ENCODE measurements at regions of chr7 and their contacts with region 1.

Region 1: GRCh38 chr7:95690367-95690947 is 81.9 kb upstream of the DYNC1I1 start:
- DNase-seq: peak; percentile 41
- ATAC-seq: peak; percentile 78
- H3K4me3 ChIP-seq: no peak overlapping the region
- H3K27ac ChIP-seq: no peak overlapping the region
- H3K4me1 ChIP-seq: no peaks in the 10 kb centered on the region
- H3K27me3 ChIP-seq: peaks cover 2% of the 10 kb centered on the region; the same call in 1 of the 2 replicates
- CTCF ChIP-seq: peak; percentile 49
- POLR2A ChIP-seq: no peak
- RAD21 ChIP-seq: peak; percentile 37

Region 2: DNA sequence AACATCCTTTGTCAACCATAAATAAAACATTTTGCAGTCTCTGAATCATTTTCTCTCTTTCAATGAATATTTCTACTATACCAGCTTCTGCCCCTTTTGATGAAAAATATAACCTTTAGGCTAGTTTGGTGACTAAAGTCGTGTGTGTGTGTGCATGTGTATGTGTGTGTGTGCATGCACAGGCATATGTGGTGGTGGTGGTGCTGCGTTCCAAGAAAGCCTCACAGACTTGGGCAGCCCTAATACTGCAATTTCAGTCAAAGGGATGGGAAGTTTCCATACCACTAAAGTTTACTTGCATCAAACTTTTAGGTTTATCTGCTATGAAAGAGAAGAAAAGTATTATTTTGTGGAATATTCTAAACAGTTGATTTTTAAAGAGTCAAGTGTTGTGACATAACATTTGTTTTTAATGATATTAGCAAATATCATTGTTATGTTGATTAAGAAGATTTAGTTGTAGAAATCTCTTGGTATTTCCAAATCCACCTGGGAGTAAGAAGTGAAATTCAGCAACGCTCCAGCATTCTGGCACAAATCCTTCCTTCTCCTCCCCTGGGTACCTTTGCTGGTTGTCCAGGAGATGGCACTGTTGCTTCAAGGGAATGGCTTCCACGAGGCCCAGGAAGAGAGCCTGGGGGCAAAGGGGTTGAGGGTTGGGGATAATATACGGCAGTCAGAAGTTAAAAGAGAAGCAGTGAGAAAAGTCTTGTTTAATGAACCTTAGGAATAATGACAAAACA is 163.3 kb before region 1 on chr7:
- CTCF ChIA-PET with region 1: interaction called, 80 read pairs
- POLR2A ChIA-PET with region 1: no interaction called
- dilution Hi-C with region 1: loop called (anchors 25 kb)
- in situ Hi-C with region 1: no loop called
- intact Hi-C with region 1: loop called (anchors 1 kb)
- DNase-seq: peak; percentile 44
- ATAC-seq: peak; percentile 91
- H3K4me3 ChIP-seq: no peak overlapping the region
- H3K27ac ChIP-seq: no peak overlapping the region
- H3K4me1 ChIP-seq: no peaks in the 10 kb centered on the region
- H3K27me3 ChIP-seq: peaks cover 11% of the 10 kb centered on the region
- CTCF ChIP-seq: peak; percentile 86
- POLR2A ChIP-seq: no peak
- RAD21 ChIP-seq: peak; percentile 80